CD4-positive, alpha-beta memory T cell (primary cell): ENCODE measurements at regions of chr12 and their contacts with region 1.

Region 1: DNA sequence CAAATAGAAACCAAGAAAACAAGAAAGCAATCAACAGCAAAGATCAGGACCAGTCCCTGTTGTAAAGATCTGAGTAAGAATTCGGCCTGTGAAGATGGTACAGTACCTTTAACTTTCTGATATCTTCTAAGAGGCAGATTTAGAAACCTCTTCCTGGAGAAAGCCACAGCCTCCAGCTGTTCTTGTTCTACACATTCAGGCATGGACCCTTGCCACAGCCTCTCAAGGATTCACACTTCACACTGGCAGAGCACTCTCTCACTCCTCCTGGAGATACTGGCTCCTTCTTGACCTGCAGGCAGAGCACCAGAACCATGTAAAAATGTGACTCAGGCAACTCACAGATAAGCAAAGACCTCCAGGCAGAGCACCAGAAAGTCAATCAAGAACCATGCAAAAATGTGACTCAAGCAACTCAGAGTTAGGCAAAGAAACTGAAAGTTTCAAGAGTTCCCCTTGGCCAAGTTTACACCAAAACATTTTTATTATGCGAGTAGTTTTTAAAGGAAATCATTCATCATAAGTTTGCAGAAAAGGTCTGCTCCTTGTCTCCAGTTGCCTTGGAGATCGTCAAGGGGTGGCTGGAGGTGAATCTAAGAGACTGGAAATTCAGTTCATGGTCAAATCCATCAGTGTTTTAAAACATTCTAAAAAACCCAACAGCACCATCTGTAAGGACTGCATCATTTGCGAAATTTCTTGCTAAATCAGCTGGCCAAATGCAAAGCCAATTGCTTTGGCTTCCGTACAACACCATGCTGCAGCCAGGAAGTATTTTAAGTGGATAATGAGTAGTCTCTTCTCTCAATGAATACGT is 119.3 kb upstream of the MDM1 start:
- DNase-seq: peak; percentile 24 to 57 (median 44)
- H3K4me3 ChIP-seq: peak overlapping the region in 1 of 2 donors; percentile 3
- H3K4me3 Mint-ChIP-seq: peak overlapping the region; percentile 66 to 90 (median 84)
- H3K27ac ChIP-seq: peak overlapping the region; percentile 46
- H3K27ac Mint-ChIP-seq: peak overlapping the region; percentile 74 to 92 (median 88)
- H3K4me1 ChIP-seq: peaks cover 96% of the 10 kb centered on the region
- H3K4me1 Mint-ChIP-seq: peaks cover 61 to 97% (median 86%) of the 10 kb centered on the region in 4 donors
- H3K27me3 ChIP-seq: no peaks in the 10 kb centered on the region
- H3K27me3 Mint-ChIP-seq: no peaks in the 10 kb centered on the region

Region 2: DNA sequence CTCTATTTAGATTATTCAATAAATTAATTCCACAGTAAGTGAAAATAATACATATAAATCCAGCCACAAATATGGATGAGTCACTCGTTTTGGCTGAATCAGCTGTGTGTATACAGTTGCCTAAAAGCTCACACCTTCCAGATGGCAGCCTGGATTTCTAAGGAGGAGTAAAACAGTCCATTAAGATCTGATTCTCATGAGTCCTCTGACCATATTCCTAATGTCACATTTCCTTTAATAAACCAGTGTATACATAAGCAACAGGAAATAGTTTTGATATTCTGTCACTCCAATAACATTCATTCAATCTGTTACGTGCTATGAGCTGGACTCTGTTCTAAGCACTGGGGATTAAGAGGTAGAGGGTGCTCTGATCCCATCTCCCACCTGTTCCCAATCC is 141.1 kb before region 1 on chr12:
- CTCF ChIA-PET with region 1: no interaction called
- POLR2A ChIA-PET with region 1: no interaction called
- intact Hi-C with region 1: no loop called
- DNase-seq: no peak
- H3K4me3 ChIP-seq: no peak overlapping the region
- H3K4me3 Mint-ChIP-seq: no peak overlapping the region
- H3K27ac ChIP-seq: no peak overlapping the region
- H3K27ac Mint-ChIP-seq: no peak overlapping the region
- H3K4me1 ChIP-seq: no peaks in the 10 kb centered on the region
- H3K4me1 Mint-ChIP-seq: peaks cover 3 to 11% (median 7%) of the 10 kb centered on the region in 4 donors
- H3K27me3 ChIP-seq: no peaks in the 10 kb centered on the region
- H3K27me3 Mint-ChIP-seq: no peaks in the 10 kb centered on the region

Region 3: DNA sequence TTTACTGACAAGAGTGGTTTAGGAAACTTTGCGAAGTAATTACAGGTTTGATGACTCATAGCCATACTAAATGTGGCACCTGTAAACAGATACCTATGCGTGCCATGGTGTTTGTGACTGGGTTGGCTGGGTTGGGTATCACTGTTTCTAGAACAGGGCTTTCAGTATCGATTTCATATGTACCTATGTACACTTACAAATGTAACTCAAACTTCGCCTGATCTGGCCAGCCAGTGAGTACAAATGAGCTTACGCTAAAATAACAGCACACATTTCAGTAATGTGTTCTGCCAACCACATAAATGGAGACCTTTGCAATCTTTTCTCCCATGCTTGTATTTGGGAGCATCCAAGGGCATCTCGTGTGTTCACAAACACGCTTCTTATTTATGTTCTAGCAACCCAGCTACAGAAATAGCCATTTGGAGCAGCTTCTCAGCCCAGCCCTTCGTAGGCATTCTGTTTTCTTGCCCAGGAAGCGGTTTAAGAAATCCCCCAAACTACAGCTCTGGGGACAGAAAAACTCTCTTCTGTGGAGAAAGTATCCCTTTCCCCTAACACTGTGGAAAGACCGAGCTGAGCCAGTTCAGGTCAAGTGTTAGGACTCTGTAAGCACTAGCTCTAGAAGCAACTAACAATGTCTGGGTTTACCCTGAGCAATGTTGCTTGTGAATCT is 77.0 kb before region 1 on chr12:
- CTCF ChIA-PET with region 1: no interaction called
- POLR2A ChIA-PET with region 1: interaction called, 3 read pairs
- intact Hi-C with region 1: loop called (anchors 5 kb)
- DNase-seq: peak; percentile 43 to 81 (median 64)
- H3K4me3 ChIP-seq: peak overlapping the region in 1 of 2 donors; percentile 4
- H3K4me3 Mint-ChIP-seq: peak overlapping the region in 6 of 8 donors; percentile 47 to 77 (median 68)
- H3K27ac ChIP-seq: peak overlapping the region; percentile 24
- H3K27ac Mint-ChIP-seq: peak overlapping the region; percentile 72 to 90 (median 85)
- H3K4me1 ChIP-seq: peaks cover 39% of the 10 kb centered on the region
- H3K4me1 Mint-ChIP-seq: peaks cover 20 to 60% (median 31%) of the 10 kb centered on the region in 4 donors
- H3K27me3 ChIP-seq: no peaks in the 10 kb centered on the region
- H3K27me3 Mint-ChIP-seq: no peaks in the 10 kb centered on the region